Naive thymus-derived CD4-positive, alpha-beta T cell (primary cell): ENCODE measurements at regions of chr3 and their contacts with region 1.

Region 1: DNA sequence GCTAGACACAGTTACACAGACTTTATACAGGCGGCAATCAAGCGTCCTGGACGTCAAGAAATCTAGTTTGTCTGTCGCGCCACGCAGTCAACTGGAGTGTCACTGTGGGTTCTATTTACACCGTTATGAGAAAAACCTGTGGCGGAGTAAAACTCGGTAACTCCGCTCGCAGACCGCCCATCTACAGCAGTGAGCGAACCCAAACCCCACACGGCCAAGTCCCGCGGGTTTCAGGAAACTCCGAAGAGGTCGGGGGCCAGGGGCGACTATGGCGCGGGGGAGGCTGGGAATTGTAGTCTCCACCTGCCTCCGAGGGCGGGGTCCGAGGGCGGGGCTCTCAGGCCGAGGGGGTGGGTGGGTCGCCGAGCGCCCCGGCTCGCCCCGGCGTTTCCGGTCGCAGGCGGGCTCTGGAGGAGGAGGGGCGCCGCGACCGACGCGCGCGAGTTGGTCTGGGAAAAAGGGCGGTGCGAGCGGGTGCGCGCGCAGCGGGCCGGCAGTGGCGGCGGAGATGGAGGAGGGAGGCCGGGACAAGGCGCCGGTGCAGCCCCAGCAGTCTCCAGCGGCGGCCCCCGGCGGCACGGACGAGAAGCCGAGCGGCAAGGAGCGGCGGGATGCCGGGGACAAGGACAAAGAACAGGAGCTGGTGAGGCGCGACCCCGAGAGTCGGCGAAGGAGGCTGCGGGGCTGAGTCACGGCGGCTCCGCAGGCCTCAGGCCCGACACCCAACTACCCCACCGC is at the start of gene PSMD2:
- DNase-seq: peak; percentile 93 to 97 (median 96)
- ATAC-seq: peak; percentile 98
- H3K4me3 ChIP-seq: peak within 1 kb of the TSS; percentile 74
- H3K4me3 Mint-ChIP-seq: peak within 1 kb of the TSS; percentile 89 to 97 (median 94)
- H3K27ac ChIP-seq: peak within 1 kb of the TSS; percentile 80
- H3K27ac Mint-ChIP-seq: peak within 1 kb of the TSS; percentile 85 to 97 (median 92)
- H3K4me1 ChIP-seq: peaks cover 12 to 15% of the 10 kb centered on the region in 2 donors
- H3K4me1 Mint-ChIP-seq: peaks cover 15 to 37% (median 25%) of the 10 kb centered on the region in 7 donors
- H3K27me3 ChIP-seq: no peaks in the 10 kb centered on the region
- H3K27me3 Mint-ChIP-seq: peaks cover 0 to 8% (median 0%) of the 10 kb centered on the region in 5 donors
- total RNA-seq, gene PSMD2: 139 to 204 (median 149) TPM

Region 2: GRCh38 chr3:183884427-183885296 is 414.3 kb before region 1 on chr3 and contains the start of gene PARL:
- CTCF ChIA-PET with region 1: no interaction called
- POLR2A ChIA-PET with region 1: interaction called, 4 read pairs
- intact Hi-C with region 1: loop called (anchors 1 to 2 kb)
- DNase-seq: peak; percentile 88 to 99 (median 95)
- ATAC-seq: peak; percentile 100
- H3K4me3 ChIP-seq: peak within 1 kb of the TSS; percentile 85
- H3K4me3 Mint-ChIP-seq: peak within 1 kb of the TSS; percentile 89 to 98 (median 96)
- H3K27ac ChIP-seq: peak within 1 kb of the TSS; percentile 77
- H3K27ac Mint-ChIP-seq: peak within 1 kb of the TSS; percentile 86 to 96 (median 93)
- H3K4me1 ChIP-seq: peaks cover 15% of the 10 kb centered on the region in 2 donors
- H3K4me1 Mint-ChIP-seq: peaks cover 15 to 53% (median 41%) of the 10 kb centered on the region in 7 donors
- H3K27me3 ChIP-seq: no peaks in the 10 kb centered on the region
- H3K27me3 Mint-ChIP-seq: peaks cover 0 to 3% (median 0%) of the 10 kb centered on the region in 5 donors
- total RNA-seq, gene PARL: 41.6 to 50.4 (median 47.1) TPM

Region 3: GRCh38 chr3:184003187-184003967 is 295.6 kb before region 1 on chr3:
- CTCF ChIA-PET with region 1: no interaction called
- POLR2A ChIA-PET with region 1: no interaction called
- intact Hi-C with region 1: no loop called
- DNase-seq: no peak
- ATAC-seq: no peak
- H3K4me3 ChIP-seq: no peak overlapping the region
- H3K4me3 Mint-ChIP-seq: no peak overlapping the region
- H3K27ac ChIP-seq: no peak overlapping the region
- H3K27ac Mint-ChIP-seq: no peak overlapping the region
- H3K4me1 ChIP-seq: no peaks in the 10 kb centered on the region
- H3K4me1 Mint-ChIP-seq: peaks cover 10 to 12% (median 11%) of the 10 kb centered on the region in 7 donors
- H3K27me3 ChIP-seq: no peaks in the 10 kb centered on the region
- H3K27me3 Mint-ChIP-seq: no peaks in the 10 kb centered on the region

Region 4: DNA sequence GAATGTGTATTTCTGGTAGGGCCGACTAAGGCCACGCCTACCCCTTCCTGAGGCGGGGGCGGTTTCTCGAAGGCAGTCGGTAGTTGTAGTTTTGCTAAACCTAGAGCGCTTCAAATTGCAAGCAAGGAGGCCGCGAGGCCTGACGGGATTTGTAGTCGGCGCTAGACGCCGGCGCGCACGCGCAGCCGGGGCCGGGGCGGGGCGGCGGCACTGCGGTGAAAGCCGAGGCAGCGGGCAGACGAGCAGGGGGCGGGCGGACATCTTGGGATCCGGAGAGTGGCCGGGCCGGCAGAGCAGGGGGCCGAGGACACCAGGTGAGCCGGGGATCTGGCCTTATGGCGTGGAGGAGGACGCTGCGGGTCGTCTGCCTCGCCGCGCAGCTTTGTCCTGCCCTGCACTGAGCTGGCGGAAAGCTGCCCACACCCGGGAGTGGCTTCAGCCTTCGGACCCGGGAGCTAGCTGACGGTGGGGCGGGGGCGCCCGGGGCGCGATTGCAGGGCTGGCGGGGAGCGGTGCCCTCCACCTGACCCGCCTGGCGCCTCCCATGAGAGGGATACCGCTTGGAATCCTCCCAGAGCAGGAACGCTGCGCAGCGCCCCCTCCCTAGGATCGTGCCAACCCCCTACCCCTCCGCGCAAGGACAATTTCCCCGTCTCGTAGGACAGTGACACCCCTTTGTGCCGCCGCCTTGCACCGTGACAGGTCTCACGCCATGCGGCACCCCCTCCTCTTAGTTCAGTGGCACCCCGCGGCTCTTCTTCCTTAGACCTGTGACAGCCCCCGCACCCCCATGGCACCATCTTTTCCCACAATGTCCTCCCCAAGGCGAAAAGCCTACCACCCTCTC is 124.1 kb before region 1 on chr3 and contains the start of gene AP2M1:
- CTCF ChIA-PET with region 1: interaction called, 3 read pairs
- POLR2A ChIA-PET with region 1: no interaction called
- intact Hi-C with region 1: loop called (anchors 1 kb)
- DNase-seq: peak; percentile 98 to 99 (median 98)
- ATAC-seq: peak; percentile 98
- H3K4me3 ChIP-seq: peak within 1 kb of the TSS; percentile 82
- H3K4me3 Mint-ChIP-seq: peak within 1 kb of the TSS; percentile 89 to 98 (median 96)
- H3K27ac ChIP-seq: peak within 1 kb of the TSS; percentile 95
- H3K27ac Mint-ChIP-seq: peak within 1 kb of the TSS; percentile 75 to 94 (median 90)
- H3K4me1 ChIP-seq: peaks cover 18 to 20% of the 10 kb centered on the region in 2 donors
- H3K4me1 Mint-ChIP-seq: peaks cover 14 to 46% (median 38%) of the 10 kb centered on the region in 7 donors
- H3K27me3 ChIP-seq: no peaks in the 10 kb centered on the region
- H3K27me3 Mint-ChIP-seq: no peaks in the 10 kb centered on the region
- total RNA-seq, gene AP2M1: 111 to 217 (median 185) TPM

Region 5: GRCh38 chr3:184229394-184230080 is 69.4 kb before region 1 on chr3 and contains the start of gene VWA5B2:
- CTCF ChIA-PET with region 1: no interaction called
- POLR2A ChIA-PET with region 1: no interaction called
- intact Hi-C with region 1: loop called in 1 of 2 experiments (anchors 2 kb)
- DNase-seq: peak; percentile 58 to 72 (median 66)
- ATAC-seq: peak; percentile 96
- H3K4me3 ChIP-seq: peak within 1 kb of the TSS; percentile 58
- H3K4me3 Mint-ChIP-seq: peak within 1 kb of the TSS; percentile 41 to 82 (median 74)
- H3K27ac ChIP-seq: no peak within 1 kb of the TSS
- H3K27ac Mint-ChIP-seq: no peak within 1 kb of the TSS
- H3K4me1 ChIP-seq: peaks cover 0 to 5% of the 10 kb centered on the region in 2 donors
- H3K4me1 Mint-ChIP-seq: peaks cover 8 to 14% (median 10%) of the 10 kb centered on the region in 7 donors
- H3K27me3 ChIP-seq: peaks cover 4 to 17% of the 10 kb centered on the region in 2 donors
- H3K27me3 Mint-ChIP-seq: peaks cover 46 to 65% (median 57%) of the 10 kb centered on the region in 5 donors
- total RNA-seq, gene VWA5B2: not detected

Region 6: DNA sequence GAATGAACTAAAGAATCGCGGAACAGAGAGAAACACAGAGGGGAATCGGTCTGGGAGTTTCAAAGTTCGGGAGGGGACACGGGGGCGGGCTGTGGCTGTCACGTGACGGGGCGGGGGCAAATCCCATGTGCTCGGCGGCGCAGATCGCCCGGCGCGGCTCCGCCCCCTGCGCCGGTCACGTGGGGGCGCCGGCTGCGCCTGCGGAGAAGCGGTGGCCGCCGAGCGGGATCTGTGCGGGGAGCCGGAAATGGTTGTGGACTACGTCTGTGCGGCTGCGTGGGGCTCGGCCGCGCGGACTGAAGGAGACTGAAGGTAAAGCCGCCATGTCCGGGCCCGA is 15.4 kb after region 1 on chr3 and contains the start of gene EIF4G1:
- CTCF ChIA-PET with region 1: no interaction called
- POLR2A ChIA-PET with region 1: interaction called, 7 read pairs
- intact Hi-C with region 1: loop called (anchors 1 kb)
- DNase-seq: peak; percentile 89 to 95 (median 91)
- ATAC-seq: peak; percentile 95
- H3K4me3 ChIP-seq: peak within 1 kb of the TSS; percentile 73
- H3K4me3 Mint-ChIP-seq: peak within 1 kb of the TSS; percentile 79 to 94 (median 88)
- H3K27ac ChIP-seq: peak within 1 kb of the TSS; percentile 93
- H3K27ac Mint-ChIP-seq: peak within 1 kb of the TSS; percentile 68 to 95 (median 89)
- H3K4me1 ChIP-seq: peaks cover 0 to 17% of the 10 kb centered on the region in 2 donors
- H3K4me1 Mint-ChIP-seq: peaks cover 15 to 35% (median 28%) of the 10 kb centered on the region in 7 donors
- H3K27me3 ChIP-seq: no peaks in the 10 kb centered on the region
- H3K27me3 Mint-ChIP-seq: no peaks in the 10 kb centered on the region
- total RNA-seq, gene EIF4G1: 200 to 341 (median 256) TPM

Region 7: GRCh38 chr3:184362668-184363540 is 64.0 kb after region 1 on chr3:
- CTCF ChIA-PET with region 1: no interaction called
- POLR2A ChIA-PET with region 1: interaction called, 3 read pairs
- intact Hi-C with region 1: loop called (anchors 1 kb)
- DNase-seq: peak; percentile 74 to 94 (median 90)
- ATAC-seq: peak; percentile 87
- H3K4me3 ChIP-seq: peak overlapping the region; percentile 97
- H3K4me3 Mint-ChIP-seq: peak overlapping the region; percentile 95 to 100 (median 99)
- H3K27ac ChIP-seq: peak overlapping the region; percentile 84
- H3K27ac Mint-ChIP-seq: peak overlapping the region; percentile 91 to 98 (median 97)
- H3K4me1 ChIP-seq: peaks cover 11 to 13% of the 10 kb centered on the region in 2 donors
- H3K4me1 Mint-ChIP-seq: peaks cover 25 to 37% (median 30%) of the 10 kb centered on the region in 7 donors
- H3K27me3 ChIP-seq: no peaks in the 10 kb centered on the region
- H3K27me3 Mint-ChIP-seq: peaks cover 0 to 13% (median 0%) of the 10 kb centered on the region in 5 donors